Mammary epithelial cell (primary cell): ENCODE measurements at regions of chr6 and their contacts with region 1.

Region 1: DNA sequence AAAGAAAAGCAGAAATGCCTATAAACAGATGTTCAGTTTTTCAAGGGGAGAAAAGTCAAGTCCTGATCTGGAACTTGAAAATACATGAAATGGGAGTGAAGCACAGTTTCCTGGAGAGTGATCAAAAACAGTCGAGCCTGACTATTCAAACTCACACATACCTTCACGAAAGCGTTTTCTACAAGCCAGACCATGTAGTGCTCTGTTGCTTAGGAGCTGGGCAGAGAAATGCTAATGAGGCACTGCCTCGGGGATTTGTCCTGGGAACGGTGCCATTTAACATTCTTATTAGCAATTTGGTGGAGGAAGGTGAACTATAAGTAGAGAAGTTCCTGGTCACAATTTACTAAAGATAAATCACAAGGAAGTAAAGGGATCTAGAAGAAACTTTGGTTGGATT is 5.9 kb downstream of the NHSL1 start:
- DNase-seq: peak; percentile 87
- H3K4me3 ChIP-seq: peak overlapping the region in 1 of 3 experiments; percentile 30
- H3K27ac ChIP-seq: peak overlapping the region; percentile 96
- H3K4me1 ChIP-seq: peaks cover 33% of the 10 kb centered on the region
- H3K27me3 ChIP-seq: no peaks in the 10 kb centered on the region
- CTCF ChIP-seq: no peak

Region 2: DNA sequence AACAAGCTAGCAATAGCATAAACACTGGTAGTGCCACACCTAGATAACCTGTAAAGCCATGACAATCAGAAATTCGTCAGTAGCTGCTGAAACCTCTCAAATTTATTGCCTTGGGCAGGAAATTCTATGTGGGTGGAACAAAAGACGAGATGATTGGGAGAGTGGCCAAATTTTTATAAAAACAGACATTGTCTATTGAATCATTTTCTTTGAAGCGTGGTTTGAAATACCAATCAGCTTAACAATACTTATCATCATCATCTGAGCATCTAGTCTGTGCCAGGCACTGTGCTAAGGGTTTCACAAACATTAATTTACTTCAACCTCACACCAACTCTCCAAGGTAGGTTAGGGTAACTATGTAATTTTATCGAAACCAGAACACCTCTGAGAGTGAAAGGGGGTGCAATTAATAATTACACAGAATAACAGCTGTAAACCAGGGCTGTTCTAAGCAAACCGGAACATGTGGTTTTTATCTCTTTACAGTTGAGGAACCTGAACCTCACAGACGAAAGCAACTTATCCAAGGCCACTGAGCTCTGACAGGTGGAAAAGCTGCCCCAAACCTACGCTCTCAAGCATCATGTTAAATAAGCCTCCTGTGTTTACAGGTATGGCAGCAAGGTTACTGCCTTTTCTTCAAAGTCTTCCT is 37.5 kb before region 1 on chr6:
- CTCF ChIA-PET with region 1: no interaction called
- dilution Hi-C with region 1: no loop called
- in situ Hi-C with region 1: no loop called
- intact Hi-C with region 1: loop called (anchors 1 kb)
- DNase-seq: peak; percentile 97
- H3K4me3 ChIP-seq: peak overlapping the region in 2 of 3 experiments; percentile 13 to 15
- H3K27ac ChIP-seq: peak overlapping the region; percentile 96
- H3K4me1 ChIP-seq: peaks cover 29% of the 10 kb centered on the region
- H3K27me3 ChIP-seq: no peaks in the 10 kb centered on the region
- CTCF ChIP-seq: no peak